CD4-positive, alpha-beta T cell (primary cell): ENCODE measurements at regions of chr7 and their contacts with region 1.

Region 1: DNA sequence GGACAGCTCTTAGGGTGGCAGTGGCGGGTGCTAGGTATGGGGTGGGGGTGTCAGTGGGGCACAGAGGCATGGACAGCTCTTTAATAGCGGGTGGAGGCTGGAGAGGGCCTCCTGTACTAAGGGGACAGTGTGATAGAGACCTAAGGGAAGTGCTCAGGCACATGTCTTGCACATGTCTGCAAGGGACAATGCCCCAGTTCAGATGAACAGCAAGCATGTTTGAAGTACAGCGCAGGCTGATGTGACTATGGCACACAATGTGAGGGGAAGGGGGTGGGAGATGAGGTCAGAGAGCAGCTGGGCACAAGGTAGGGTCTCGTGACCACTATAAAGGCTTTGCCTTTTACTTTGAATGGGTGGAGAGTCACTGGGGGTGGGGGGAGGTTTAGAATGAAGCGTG is 3.5 kb downstream of the GIMAP8 start:
- DNase-seq: peak in 1 of 14 experiments; percentile 21
- ATAC-seq: no peak
- H3K4me3 ChIP-seq: peak overlapping the region; percentile 96
- H3K4me3 Mint-ChIP-seq: peak overlapping the region; percentile 86
- H3K27ac ChIP-seq: peak overlapping the region; percentile 66 to 68
- H3K27ac Mint-ChIP-seq: peak overlapping the region; percentile 78
- H3K4me1 ChIP-seq: peaks cover 56% of the 10 kb centered on the region
- H3K4me1 Mint-ChIP-seq: peaks cover 76% of the 10 kb centered on the region
- H3K27me3 ChIP-seq: no peaks in the 10 kb centered on the region
- H3K27me3 Mint-ChIP-seq: no peaks in the 10 kb centered on the region
- CTCF ChIP-seq: no peak

Region 2: GRCh38 chr7:150466477-150466876 is 12.6 kb after region 1 on chr7:
- CTCF ChIA-PET with region 1: interaction called, 4 read pairs
- POLR2A ChIA-PET with region 1: interaction called, 20 read pairs
- intact Hi-C with region 1: no loop called
- DNase-seq: no peak
- ATAC-seq: no peak
- H3K4me3 ChIP-seq: no peak overlapping the region
- H3K4me3 Mint-ChIP-seq: peak overlapping the region; percentile 17
- H3K27ac ChIP-seq: no peak overlapping the region
- H3K27ac Mint-ChIP-seq: peak overlapping the region; percentile 81
- H3K4me1 ChIP-seq: peaks cover 52% of the 10 kb centered on the region
- H3K4me1 Mint-ChIP-seq: peaks cover 97% of the 10 kb centered on the region
- H3K27me3 ChIP-seq: no peaks in the 10 kb centered on the region
- H3K27me3 Mint-ChIP-seq: no peaks in the 10 kb centered on the region
- CTCF ChIP-seq: no peak

Region 3: GRCh38 chr7:150476285-150476684 is 22.4 kb after region 1 on chr7:
- CTCF ChIA-PET with region 1: interaction called, 9 read pairs
- POLR2A ChIA-PET with region 1: interaction called, 296 read pairs
- intact Hi-C with region 1: loop called (anchors 2 kb)
- DNase-seq: no peak
- ATAC-seq: no peak
- H3K4me3 ChIP-seq: no peak overlapping the region
- H3K4me3 Mint-ChIP-seq: peak overlapping the region; percentile 25
- H3K27ac ChIP-seq: peak overlapping the region; percentile 92 to 95
- H3K27ac Mint-ChIP-seq: peak overlapping the region; percentile 97
- H3K4me1 ChIP-seq: peaks cover 72% of the 10 kb centered on the region
- H3K4me1 Mint-ChIP-seq: peaks cover 92% of the 10 kb centered on the region
- H3K27me3 ChIP-seq: no peaks in the 10 kb centered on the region
- H3K27me3 Mint-ChIP-seq: no peaks in the 10 kb centered on the region
- CTCF ChIP-seq: no peak

Region 4: GRCh38 chr7:151570366-151570915 is 1116.5 kb after region 1 on chr7:
- CTCF ChIA-PET with region 1: no interaction called
- POLR2A ChIA-PET with region 1: no interaction called
- intact Hi-C with region 1: no loop called
- DNase-seq: peak in 2 of 14 experiments; percentile 24 to 32
- ATAC-seq: no peak
- H3K4me3 ChIP-seq: no peak overlapping the region
- H3K4me3 Mint-ChIP-seq: no peak overlapping the region
- H3K27ac ChIP-seq: no peak overlapping the region
- H3K27ac Mint-ChIP-seq: no peak overlapping the region
- H3K4me1 ChIP-seq: no peaks in the 10 kb centered on the region
- H3K4me1 Mint-ChIP-seq: no peaks in the 10 kb centered on the region
- H3K27me3 ChIP-seq: no peaks in the 10 kb centered on the region
- H3K27me3 Mint-ChIP-seq: no peaks in the 10 kb centered on the region
- CTCF ChIP-seq: peak; percentile 49